Head of caudate nucleus (tissue), 42 donors: ENCODE measurements at regions of chr9 and their contacts with region 1.

Region 1: GRCh38 chr9:128412120-128412790 is 8.4 kb upstream of the CERCAM start:
- DNase-seq: peak; percentile 77 to 98 (median 93)

Region 2: GRCh38 chr9:128365525-128365924 is 46.7 kb before region 1 on chr9:
- intact Hi-C with region 1: loop called (anchors 2 kb)
- DNase-seq: no peak

Region 3: GRCh38 chr9:128374221-128374675 is 38.0 kb before region 1 on chr9:
- intact Hi-C with region 1: loop called (anchors 2 kb)
- DNase-seq: peak; percentile 69 to 95 (median 88)

Region 4: DNA sequence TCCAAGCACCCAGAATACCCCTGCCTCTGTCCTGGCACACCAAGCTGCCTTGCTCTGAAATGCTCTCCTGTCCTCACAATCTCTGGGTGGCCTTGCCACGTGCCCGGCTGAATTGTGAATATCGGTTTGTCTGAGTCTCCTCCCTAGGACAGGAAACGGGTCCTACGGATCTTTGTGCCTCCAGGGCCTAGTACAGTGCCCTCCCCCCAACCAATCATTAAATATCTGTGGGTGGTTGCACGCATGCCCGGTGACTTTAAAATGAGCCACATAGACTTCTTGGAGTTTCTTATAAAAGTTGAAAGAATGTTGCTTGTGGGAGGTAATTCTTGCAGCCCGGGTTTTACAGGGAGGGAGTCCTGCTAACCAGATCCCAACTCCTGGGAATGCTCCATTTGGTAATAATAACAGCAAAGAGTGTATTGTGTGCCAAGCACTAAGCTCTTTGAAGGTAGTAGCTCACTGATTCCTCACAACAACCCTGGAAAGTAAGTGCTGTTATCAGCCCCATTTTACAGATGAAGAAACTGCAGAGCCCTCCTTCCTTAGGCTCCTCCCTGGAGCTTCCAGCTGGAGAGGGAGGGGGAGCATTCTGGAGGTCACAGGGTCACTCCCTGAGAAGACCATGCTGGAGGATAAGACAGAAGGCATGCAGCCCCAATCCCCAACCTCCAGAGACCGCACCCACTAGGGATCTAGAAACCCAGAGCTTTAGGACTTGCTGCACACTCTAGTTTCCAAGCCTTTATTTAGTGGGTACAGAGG is 17.7 kb before region 1 on chr9:
- intact Hi-C with region 1: loop called (anchors 2 kb)
- DNase-seq: peak in 36 of 42 donors; percentile 52 to 88 (median 72)

Region 5: GRCh38 chr9:128455849-128456612 is 43.8 kb after region 1 on chr9 and contains the start of gene ODF2:
- intact Hi-C with region 1: no loop called
- DNase-seq: peak; percentile 97 to 100 (median 99)